ENCODE measurements at regions of chr22 and their contacts with region 1.

Region 1: GRCh38 chr22:23767673-23768548 is at the start of gene CHCHD10:
- DNase-seq: peak; percentile 93
- ATAC-seq: peak; percentile 82
- total RNA-seq, gene CHCHD10: 1,642 TPM

Region 2: DNA sequence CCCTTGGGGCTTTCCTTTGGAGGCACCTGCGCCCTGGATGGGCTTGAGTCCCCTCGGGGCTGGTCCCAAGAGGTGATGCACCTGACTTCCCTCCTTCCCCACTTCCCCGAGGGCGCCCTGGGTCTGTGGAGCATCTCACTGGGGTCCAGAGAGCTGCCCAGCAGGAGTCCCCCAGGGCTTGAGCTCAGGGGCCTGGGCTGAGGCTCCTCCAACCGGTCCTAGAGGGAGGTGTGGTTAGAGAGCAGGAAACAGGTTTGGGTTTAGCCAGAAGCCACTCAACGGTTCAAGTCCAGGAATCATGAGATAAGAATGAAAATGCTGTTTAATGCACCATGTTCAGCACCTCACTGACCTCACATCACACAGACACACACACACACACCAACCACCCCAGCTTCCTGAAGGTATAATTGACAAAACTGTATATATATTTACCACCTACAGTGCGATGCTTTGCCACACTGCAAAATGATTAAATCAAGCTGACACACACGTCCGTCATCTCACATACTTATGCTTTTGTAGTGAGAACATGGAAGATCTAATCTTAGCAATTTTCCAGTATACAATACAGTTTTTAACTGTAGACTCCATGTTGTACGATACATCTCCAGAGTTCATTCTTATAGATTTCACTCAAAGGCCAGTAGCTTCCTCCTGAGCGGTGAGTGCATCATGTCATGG is 187.2 kb before region 1 on chr22:
- intact Hi-C with region 1: no loop called
- DNase-seq: no peak
- ATAC-seq: no peak

Region 3: DNA sequence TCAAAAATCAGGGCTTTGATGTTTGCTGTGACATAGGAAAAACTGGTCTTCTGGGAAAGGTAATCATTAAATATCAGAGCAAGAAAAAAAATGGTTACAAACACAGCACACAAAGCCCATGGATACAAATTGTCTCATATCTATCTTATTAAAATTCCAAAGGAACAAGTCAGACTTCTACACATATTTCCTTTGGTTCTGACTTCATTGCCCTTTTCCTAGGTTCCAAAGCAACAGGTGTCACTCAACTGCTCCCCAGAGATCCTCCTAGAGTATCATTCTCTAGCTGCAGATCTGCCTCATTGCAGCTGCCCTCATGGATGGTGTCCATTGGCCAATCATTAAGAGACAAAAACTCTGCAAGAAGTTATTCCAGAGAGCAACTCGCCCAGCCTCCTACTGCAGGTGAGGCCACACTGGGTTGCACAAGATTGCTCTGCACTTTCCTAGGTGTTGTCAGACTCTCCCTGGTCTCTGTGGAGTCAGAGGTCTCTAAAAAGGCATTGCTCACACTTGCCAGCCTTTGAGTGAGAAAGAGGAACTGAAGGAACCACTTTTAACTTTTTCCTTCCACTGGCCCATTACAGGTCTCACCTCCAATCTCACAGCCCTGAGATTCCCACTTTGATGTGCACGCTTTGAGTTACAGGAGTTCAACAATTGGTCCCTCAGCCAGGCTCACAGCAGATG is 141.5 kb before region 1 on chr22:
- intact Hi-C with region 1: loop called (anchors 5 kb)
- DNase-seq: no peak
- ATAC-seq: no peak

Region 4: GRCh38 chr22:23786752-23787599 is 19.1 kb after region 1 on chr22 and contains the start of gene SMARCB1:
- intact Hi-C with region 1: loop called (anchors 2 kb)
- DNase-seq: peak; percentile 98
- ATAC-seq: peak; percentile 93
- total RNA-seq, gene SMARCB1: 52.5 TPM

Measured in Right ventricle myocardium inferior (tissue), 1 donor.